ENCODE measurements at regions of chr9 and their contacts with region 1.

Region 1: GRCh38 chr9:35646533-35647265 is 4.0 kb downstream of the SIT1 start:
- DNase-seq: peak; percentile 97
- ATAC-seq: peak; percentile 83
- H3K4me3 Mint-ChIP-seq: peak overlapping the region; percentile 97
- H3K27ac Mint-ChIP-seq: peak overlapping the region; percentile 96
- H3K4me1 Mint-ChIP-seq: peaks cover 67% of the 10 kb centered on the region
- H3K27me3 Mint-ChIP-seq: no peaks in the 10 kb centered on the region

Region 2: DNA sequence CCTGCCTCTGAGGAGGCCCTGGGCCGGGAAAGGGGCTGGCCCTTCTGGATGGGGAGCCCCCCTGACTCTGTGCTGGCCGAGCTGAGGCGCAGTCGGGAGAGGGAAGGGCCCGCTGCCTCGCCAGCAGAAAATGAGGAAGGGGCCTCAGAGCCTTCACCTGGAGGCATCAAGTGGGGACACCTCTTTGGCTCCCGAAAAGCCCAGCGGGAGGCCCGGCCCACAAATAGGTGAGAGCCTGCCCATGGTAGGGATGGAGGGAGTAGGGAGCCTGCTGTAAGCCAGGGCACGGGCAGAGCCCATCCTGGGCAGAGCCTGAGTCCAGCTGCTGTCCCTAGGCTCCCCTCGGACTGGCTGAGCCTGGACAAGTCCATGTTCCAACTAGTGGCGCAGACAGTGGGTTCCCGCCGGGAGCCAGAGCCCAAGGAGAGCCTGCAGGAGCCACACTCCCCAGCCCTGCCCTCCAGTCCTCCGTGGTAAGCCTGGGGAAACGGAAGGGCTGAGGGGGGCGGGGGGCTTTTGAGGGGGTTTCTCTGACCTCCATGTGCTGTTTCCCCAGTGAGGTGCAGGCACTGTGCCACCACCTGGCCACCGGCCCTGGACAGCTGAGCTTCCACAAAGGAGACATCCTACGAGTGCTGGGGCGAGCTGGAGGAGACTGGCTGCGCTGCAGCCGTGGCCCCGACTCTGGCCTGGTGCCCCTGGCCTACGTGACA is 85.9 kb before region 1 on chr9:
- CTCF ChIA-PET with region 1: no interaction called
- POLR2A ChIA-PET with region 1: no interaction called
- DNase-seq: no peak
- ATAC-seq: no peak
- H3K4me3 Mint-ChIP-seq: no peak overlapping the region
- H3K27ac Mint-ChIP-seq: no peak overlapping the region
- H3K4me1 Mint-ChIP-seq: peaks cover 3% of the 10 kb centered on the region
- H3K27me3 Mint-ChIP-seq: no peaks in the 10 kb centered on the region

Region 3: GRCh38 chr9:35593581-35593980 is 53.1 kb before region 1 on chr9:
- CTCF ChIA-PET with region 1: no interaction called
- POLR2A ChIA-PET with region 1: no interaction called
- DNase-seq: no peak
- ATAC-seq: no peak
- H3K4me3 Mint-ChIP-seq: no peak overlapping the region
- H3K27ac Mint-ChIP-seq: no peak overlapping the region
- H3K4me1 Mint-ChIP-seq: no peaks in the 10 kb centered on the region
- H3K27me3 Mint-ChIP-seq: no peaks in the 10 kb centered on the region

Region 4: GRCh38 chr9:35611230-35611797 is 35.4 kb before region 1 on chr9:
- CTCF ChIA-PET with region 1: interaction called, 272 read pairs
- POLR2A ChIA-PET with region 1: interaction called, 122 read pairs
- DNase-seq: peak; percentile 73
- ATAC-seq: peak; percentile 87
- H3K4me3 Mint-ChIP-seq: no peak overlapping the region
- H3K27ac Mint-ChIP-seq: no peak overlapping the region
- H3K4me1 Mint-ChIP-seq: peaks cover 30% of the 10 kb centered on the region
- H3K27me3 Mint-ChIP-seq: no peaks in the 10 kb centered on the region

Region 5: GRCh38 chr9:35628389-35628991 is 18.2 kb before region 1 on chr9:
- CTCF ChIA-PET with region 1: interaction called, 33 read pairs
- POLR2A ChIA-PET with region 1: no interaction called
- DNase-seq: no peak
- ATAC-seq: no peak
- H3K4me3 Mint-ChIP-seq: no peak overlapping the region
- H3K27ac Mint-ChIP-seq: no peak overlapping the region
- H3K4me1 Mint-ChIP-seq: peaks cover 16% of the 10 kb centered on the region
- H3K27me3 Mint-ChIP-seq: no peaks in the 10 kb centered on the region

Region 6: DNA sequence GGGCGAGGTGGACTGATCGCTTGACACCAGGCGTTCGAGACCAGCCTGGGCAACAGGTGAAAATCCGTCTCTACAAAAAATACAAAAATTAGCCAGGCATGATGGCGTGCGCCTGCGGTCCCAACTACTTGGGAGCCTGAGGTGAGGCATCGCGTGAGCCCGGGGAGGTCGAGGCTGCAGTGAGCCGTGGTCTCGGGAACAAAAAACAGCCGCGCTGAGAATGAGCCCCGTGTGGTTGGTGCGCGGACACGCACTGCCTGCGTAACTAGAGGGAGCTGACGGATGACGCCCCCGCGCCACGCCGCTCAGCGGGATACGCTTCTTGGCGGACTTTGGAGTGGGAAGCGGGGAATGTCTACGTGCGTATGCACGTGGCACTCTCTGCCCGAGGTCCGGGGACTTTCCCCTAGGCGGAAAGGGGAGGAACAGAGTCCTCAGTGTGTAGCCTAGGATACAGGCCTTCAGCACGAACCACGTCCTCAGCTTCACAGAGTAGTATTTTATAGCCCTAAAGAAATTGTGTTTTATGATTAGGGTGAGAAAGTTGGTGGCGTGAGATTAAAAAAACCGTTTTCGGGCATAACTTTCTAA is 10.9 kb after region 1 on chr9 and contains the start of gene RMRP:
- CTCF ChIA-PET with region 1: interaction called, 214 read pairs
- POLR2A ChIA-PET with region 1: interaction called, 59 read pairs
- DNase-seq: peak; percentile 94
- ATAC-seq: peak; percentile 92
- H3K4me3 Mint-ChIP-seq: peak within 1 kb of the TSS; percentile 92
- H3K27ac Mint-ChIP-seq: peak within 1 kb of the TSS; percentile 97
- H3K4me1 Mint-ChIP-seq: peaks cover 62% of the 10 kb centered on the region
- H3K27me3 Mint-ChIP-seq: peaks cover 3% of the 10 kb centered on the region
- total RNA-seq, gene RMRP: 7,126 to 12,592 TPM

Region 7: GRCh38 chr9:35690431-35691333 is 44.0 kb after region 1 on chr9:
- CTCF ChIA-PET with region 1: interaction called, 57 read pairs
- POLR2A ChIA-PET with region 1: interaction called, 5 read pairs
- DNase-seq: peak; percentile 39
- ATAC-seq: peak; percentile 63
- H3K4me3 Mint-ChIP-seq: peak overlapping the region; percentile 77
- H3K27ac Mint-ChIP-seq: peak overlapping the region; percentile 67
- H3K4me1 Mint-ChIP-seq: peaks cover 34% of the 10 kb centered on the region
- H3K27me3 Mint-ChIP-seq: no peaks in the 10 kb centered on the region

Region 8: GRCh38 chr9:35859310-35859989 is 212.8 kb after region 1 on chr9:
- CTCF ChIA-PET with region 1: no interaction called
- POLR2A ChIA-PET with region 1: no interaction called
- DNase-seq: peak; percentile 20
- ATAC-seq: no peak
- H3K4me3 Mint-ChIP-seq: no peak overlapping the region
- H3K27ac Mint-ChIP-seq: no peak overlapping the region
- H3K4me1 Mint-ChIP-seq: no peaks in the 10 kb centered on the region
- H3K27me3 Mint-ChIP-seq: peaks cover 21% of the 10 kb centered on the region

Measured in activated CD8-positive, alpha-beta T cell treated with anti-CD3 and anti-CD28 coated beads, Interleukin-2, amount 10 ng/mL, durations not matched to agents 7 days and 5 days (primary cell).